ENCODE measurements at regions of chr1 and their contacts with region 1.

Region 1: GRCh38 chr1:214660862-214661261 is 57.9 kb downstream of the CENPF start:
- DNase-seq: peak; percentile 42
- H3K4me3 Mint-ChIP-seq: no peak overlapping the region
- H3K27ac Mint-ChIP-seq: no peak overlapping the region
- H3K4me1 Mint-ChIP-seq: peaks cover 13% of the 10 kb centered on the region
- H3K27me3 Mint-ChIP-seq: no peaks in the 10 kb centered on the region
- CTCF ChIP-seq: peak; percentile 82

Region 2: GRCh38 chr1:214224611-214225354 is 436.1 kb before region 1 on chr1:
- CTCF ChIA-PET with region 1: no interaction called
- POLR2A ChIA-PET with region 1: no interaction called
- intact Hi-C with region 1: no loop called
- DNase-seq: no peak
- H3K4me3 Mint-ChIP-seq: no peak overlapping the region
- H3K27ac Mint-ChIP-seq: no peak overlapping the region
- H3K4me1 Mint-ChIP-seq: peaks cover 4% of the 10 kb centered on the region
- H3K27me3 Mint-ChIP-seq: peaks cover 21% of the 10 kb centered on the region
- CTCF ChIP-seq: no peak

Region 3: GRCh38 chr1:214648801-214649200 is 12.1 kb before region 1 on chr1:
- CTCF ChIA-PET with region 1: interaction called, 89 read pairs
- POLR2A ChIA-PET with region 1: interaction called, 6 read pairs
- intact Hi-C with region 1: no loop called
- DNase-seq: no peak
- H3K4me3 Mint-ChIP-seq: no peak overlapping the region
- H3K27ac Mint-ChIP-seq: no peak overlapping the region
- H3K4me1 Mint-ChIP-seq: no peaks in the 10 kb centered on the region
- H3K27me3 Mint-ChIP-seq: no peaks in the 10 kb centered on the region
- CTCF ChIP-seq: no peak

Region 4: GRCh38 chr1:214808845-214809460 is 148.1 kb after region 1 on chr1:
- CTCF ChIA-PET with region 1: interaction called, 38 read pairs
- POLR2A ChIA-PET with region 1: interaction called, 5 read pairs
- intact Hi-C with region 1: loop called (anchors 1 kb)
- DNase-seq: peak; percentile 84
- H3K4me3 Mint-ChIP-seq: no peak overlapping the region
- H3K27ac Mint-ChIP-seq: no peak overlapping the region
- H3K4me1 Mint-ChIP-seq: no peaks in the 10 kb centered on the region
- H3K27me3 Mint-ChIP-seq: no peaks in the 10 kb centered on the region
- CTCF ChIP-seq: peak; percentile 93

Region 5: GRCh38 chr1:215132156-215132555 is 471.3 kb after region 1 on chr1:
- CTCF ChIA-PET with region 1: interaction called, 17 read pairs
- POLR2A ChIA-PET with region 1: no interaction called
- intact Hi-C with region 1: no loop called
- DNase-seq: peak; percentile 44
- H3K4me3 Mint-ChIP-seq: no peak overlapping the region
- H3K27ac Mint-ChIP-seq: no peak overlapping the region
- H3K4me1 Mint-ChIP-seq: peaks cover 21% of the 10 kb centered on the region
- H3K27me3 Mint-ChIP-seq: no peaks in the 10 kb centered on the region
- CTCF ChIP-seq: no peak

Region 6: GRCh38 chr1:215517441-215517891 is 856.6 kb after region 1 on chr1:
- CTCF ChIA-PET with region 1: interaction called, 34 read pairs
- POLR2A ChIA-PET with region 1: interaction called, 3 read pairs
- intact Hi-C with region 1: no loop called
- DNase-seq: peak; percentile 79
- H3K4me3 Mint-ChIP-seq: no peak overlapping the region
- H3K27ac Mint-ChIP-seq: peak overlapping the region; percentile 65
- H3K4me1 Mint-ChIP-seq: peaks cover 12% of the 10 kb centered on the region
- H3K27me3 Mint-ChIP-seq: no peaks in the 10 kb centered on the region
- CTCF ChIP-seq: peak; percentile 87

Measured in MCF 10A (cell line).